Ascending aorta (tissue), 2 donors: ENCODE measurements at regions of chr1 and their contacts with region 1.

Region 1: DNA sequence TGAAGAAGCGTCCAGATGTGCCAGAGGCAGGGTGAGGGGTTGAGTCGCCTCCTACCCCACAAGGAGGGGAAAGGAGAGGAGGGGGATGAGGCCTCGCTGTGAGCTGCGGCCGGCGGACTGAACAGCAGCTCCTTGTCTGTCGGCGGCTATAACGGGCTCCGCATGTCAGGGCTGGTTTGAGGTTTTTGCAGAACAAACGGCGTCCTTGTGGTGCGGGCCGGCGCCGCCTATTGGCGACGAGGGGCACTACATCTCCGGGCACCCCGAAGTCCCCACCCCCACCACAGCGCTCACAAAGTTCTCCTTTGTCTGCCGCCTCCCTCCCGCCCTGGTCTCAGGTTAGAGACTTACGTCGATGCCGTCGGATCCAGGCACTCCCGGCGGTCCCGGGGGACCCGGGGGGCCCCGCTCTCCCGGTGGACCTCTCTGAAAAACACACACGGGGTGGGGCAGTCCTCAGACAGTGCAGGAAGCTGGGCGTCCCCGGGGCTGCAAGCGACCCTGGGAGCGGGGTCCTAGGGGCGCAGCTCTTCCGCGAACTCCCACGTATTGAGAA is 1.8 kb downstream of the COL9A2 start:
- DNase-seq: peak; percentile 33 to 90
- H3K4me3 ChIP-seq: peak overlapping the region; percentile 60
- H3K27ac ChIP-seq: peak overlapping the region; percentile 74 to 81
- H3K4me1 ChIP-seq: peaks cover 0 to 18% of the 10 kb centered on the region in 2 donors
- H3K27me3 ChIP-seq: no peaks in the 10 kb centered on the region
- CTCF ChIP-seq: peak; percentile 88 to 98 (median 96)

Region 2: DNA sequence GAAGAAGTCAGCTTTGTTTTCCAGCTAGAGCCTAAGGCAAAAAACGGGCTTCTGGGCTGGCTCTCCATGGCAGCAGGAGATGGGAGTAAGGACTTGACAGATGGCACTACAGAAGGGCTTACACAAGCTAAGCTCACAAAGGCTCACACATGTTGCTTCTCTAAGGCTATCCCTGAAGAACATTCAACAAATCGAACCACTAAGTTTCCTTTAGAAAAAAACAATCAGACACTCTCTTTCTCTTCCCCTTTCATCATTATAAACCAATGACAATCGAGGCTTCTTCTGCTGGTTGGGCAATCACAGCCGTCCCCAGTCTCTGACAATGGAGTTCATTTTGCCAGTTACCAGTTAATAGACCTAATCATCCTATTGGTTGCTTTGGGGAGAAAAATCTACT is 472.5 kb before region 1 on chr1:
- intact Hi-C with region 1: no loop called
- DNase-seq: no peak
- H3K4me3 ChIP-seq: no peak overlapping the region
- H3K27ac ChIP-seq: no peak overlapping the region
- H3K4me1 ChIP-seq: peaks cover 0 to 2% of the 10 kb centered on the region in 2 donors
- H3K27me3 ChIP-seq: no peaks in the 10 kb centered on the region
- CTCF ChIP-seq: no peak

Region 3: GRCh38 chr1:40161125-40161887 is 154.0 kb before region 1 on chr1 and contains the start of gene RLF:
- intact Hi-C with region 1: loop called (anchors 2 kb)
- DNase-seq: peak; percentile 72 to 97
- H3K4me3 ChIP-seq: peak within 1 kb of the TSS; percentile 84 to 94
- H3K27ac ChIP-seq: peak within 1 kb of the TSS; percentile 91 to 95
- H3K4me1 ChIP-seq: peaks cover 7 to 8% of the 10 kb centered on the region in 2 donors
- H3K27me3 ChIP-seq: no peaks in the 10 kb centered on the region
- CTCF ChIP-seq: peak in 1 of 3 experiments; percentile 16
- total RNA-seq, gene RLF: 7.1 TPM

Region 4: DNA sequence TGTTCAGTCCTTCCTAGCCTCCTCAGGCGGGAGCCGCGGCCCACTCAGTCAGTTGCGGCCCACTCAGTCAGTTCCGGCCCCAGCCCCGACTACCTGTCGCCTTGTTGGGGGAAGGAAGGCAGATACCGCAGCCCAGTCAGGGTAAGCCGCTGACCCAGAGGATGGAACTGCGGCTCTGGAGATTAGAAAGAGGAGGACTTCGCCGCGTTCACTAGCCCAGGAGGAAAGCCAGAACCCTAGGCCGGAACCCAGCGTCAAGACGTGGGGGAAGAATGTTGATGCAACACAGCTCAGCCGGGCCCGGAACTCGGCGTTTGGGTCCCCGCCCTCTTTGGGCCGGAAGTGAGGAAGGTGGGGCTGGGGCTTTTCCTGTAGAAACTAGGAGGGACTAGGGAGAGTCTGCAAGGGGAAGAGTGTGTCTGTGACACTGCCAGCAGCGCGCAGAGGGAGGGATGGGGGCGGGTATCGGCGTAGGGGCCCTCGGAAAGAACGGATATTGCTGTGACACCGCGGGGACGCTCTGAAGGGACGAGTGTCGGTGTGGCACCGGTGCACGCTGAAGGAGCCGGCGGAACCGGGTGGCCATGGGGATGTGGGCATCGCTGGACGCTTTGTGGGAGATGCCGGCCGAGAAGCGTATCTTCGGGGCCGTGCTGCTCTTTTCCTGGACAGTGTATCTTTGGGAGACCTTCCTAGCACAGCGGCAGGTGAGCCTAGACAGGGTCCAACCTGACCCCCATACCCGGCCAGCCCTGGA is 57.5 kb before region 1 on chr1 and contains the start of gene ZMPSTE24:
- intact Hi-C with region 1: loop called (anchors 2 kb)
- DNase-seq: peak; percentile 88 to 98
- H3K4me3 ChIP-seq: peak within 1 kb of the TSS; percentile 84
- H3K27ac ChIP-seq: peak within 1 kb of the TSS; percentile 90 to 98
- H3K4me1 ChIP-seq: peaks cover 8 to 34% of the 10 kb centered on the region in 2 donors
- H3K27me3 ChIP-seq: no peaks in the 10 kb centered on the region
- CTCF ChIP-seq: no peak
- total RNA-seq, gene ZMPSTE24: 61.8 TPM

Region 5: GRCh38 chr1:40268211-40268610 is 47.1 kb before region 1 on chr1:
- intact Hi-C with region 1: no loop called
- DNase-seq: no peak
- H3K4me3 ChIP-seq: peak overlapping the region in 1 of 2 donors; percentile 11
- H3K27ac ChIP-seq: peak overlapping the region; percentile 81 to 85
- H3K4me1 ChIP-seq: peaks cover 0 to 52% of the 10 kb centered on the region in 2 donors
- H3K27me3 ChIP-seq: no peaks in the 10 kb centered on the region
- CTCF ChIP-seq: no peak